ENCODE measurements at regions of chr15 and their contacts with region 1.

Region 1: GRCh38 chr15:65101411-65101890 is 13.5 kb downstream of the UBAP1L start:
- DNase-seq: no peak
- H3K4me3 ChIP-seq: no peak overlapping the region
- CTCF ChIP-seq: peak; percentile 74

Region 2: DNA sequence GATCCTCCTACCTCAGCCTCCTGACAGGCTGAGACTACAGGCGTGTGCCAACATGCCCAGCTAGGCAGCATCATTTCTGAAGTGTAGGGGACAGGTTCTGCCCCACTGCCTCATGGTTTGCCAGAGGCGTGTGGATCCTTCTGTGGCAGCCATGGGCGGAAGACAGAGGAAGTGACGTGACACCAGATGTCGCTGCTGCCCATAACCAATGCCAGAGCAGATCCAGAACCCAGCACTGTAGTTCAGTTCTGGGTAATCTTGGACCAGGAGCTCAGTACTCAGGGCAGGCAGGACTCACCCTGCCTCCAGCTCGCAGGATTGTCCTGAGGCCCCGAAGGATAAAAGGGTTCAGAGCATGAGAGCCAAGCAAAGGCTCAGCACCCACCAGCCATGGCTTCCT is 334.2 kb before region 1 on chr15:
- CTCF ChIA-PET with region 1: no interaction called
- POLR2A ChIA-PET with region 1: no interaction called
- DNase-seq: no peak
- H3K4me3 ChIP-seq: no peak overlapping the region
- CTCF ChIP-seq: no peak

Region 3: DNA sequence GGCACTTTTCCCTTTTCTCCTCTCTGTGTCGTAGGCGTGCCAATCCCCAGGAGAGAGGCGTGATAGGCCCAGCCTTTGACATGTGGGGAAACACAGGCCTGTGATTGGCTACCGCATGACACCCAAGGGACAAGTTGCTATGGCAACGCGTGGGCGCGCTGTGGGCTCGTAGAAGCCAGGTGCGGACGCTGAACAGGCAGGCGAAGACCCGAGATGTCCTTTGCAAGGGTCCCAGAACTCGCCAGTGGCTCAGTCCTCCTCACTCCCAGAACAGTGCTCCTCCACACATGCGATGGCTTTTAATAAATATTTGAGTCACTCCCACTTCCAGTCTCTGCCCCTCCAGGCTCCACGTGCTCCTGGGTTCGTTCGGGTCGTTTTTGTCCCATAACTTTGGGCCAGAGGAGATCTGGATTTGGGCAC is 52.0 kb before region 1 on chr15:
- CTCF ChIA-PET with region 1: interaction called, 133 read pairs
- POLR2A ChIA-PET with region 1: no interaction called
- DNase-seq: peak; percentile 50
- H3K4me3 ChIP-seq: peak overlapping the region; percentile 47
- CTCF ChIP-seq: no peak

Region 4: DNA sequence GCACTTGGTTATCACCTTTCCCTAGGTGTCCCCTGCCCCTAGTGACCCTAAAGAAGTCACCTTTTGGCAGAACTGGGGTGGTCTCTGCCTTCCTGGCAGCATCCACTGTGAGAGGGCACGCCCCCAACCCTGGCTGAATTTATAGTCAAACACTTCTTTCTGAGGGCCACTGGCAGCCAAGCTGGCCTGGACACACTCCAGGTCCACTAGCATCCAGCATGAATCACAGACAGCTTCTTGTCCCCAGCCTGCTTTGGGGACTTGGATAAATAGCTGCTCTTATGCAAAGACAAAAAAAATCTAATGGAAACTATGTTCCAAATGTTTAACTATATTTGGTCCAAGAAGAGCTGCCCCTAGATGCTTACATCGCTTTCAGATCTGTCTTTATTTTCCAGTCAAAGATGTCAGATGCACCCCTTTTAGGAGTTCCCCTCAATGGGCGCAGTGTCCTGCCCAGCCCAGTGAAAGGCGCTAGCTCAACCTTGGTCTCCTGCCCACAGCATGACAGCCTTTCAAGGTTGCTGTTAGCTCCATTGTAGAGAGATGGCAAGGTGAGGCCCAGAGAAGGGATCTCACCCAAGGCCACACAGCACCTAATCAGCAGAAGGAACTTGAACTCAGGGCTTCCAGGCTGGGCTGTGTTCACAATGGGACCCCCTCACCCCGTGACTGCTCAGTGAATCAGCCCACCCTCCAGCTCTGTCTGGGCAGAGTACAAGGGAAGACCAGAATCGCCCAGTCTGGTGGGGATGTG is 40.6 kb before region 1 on chr15:
- CTCF ChIA-PET with region 1: interaction called, 133 read pairs
- POLR2A ChIA-PET with region 1: no interaction called
- DNase-seq: no peak
- H3K4me3 ChIP-seq: no peak overlapping the region
- CTCF ChIP-seq: no peak

Region 5: DNA sequence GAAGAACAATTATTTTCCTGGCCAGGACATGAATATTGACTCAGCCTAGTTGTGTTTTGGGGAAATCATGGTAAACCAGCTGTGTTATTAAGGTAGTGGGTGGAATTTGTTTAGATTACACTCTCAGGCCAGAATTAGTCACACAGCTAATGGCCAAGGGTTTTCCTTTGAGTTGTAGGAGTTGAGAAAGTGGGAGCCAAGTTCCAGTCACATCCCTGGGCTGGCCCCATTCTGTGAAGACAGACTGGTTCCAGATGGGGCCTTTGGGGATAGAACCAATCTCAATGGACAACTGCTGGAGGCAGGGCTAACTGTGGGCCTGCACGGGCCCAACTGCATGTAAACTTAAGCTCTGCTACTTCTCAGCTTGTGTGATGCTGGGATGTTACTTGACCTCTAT is 32.3 kb before region 1 on chr15:
- CTCF ChIA-PET with region 1: interaction called, 12 read pairs
- POLR2A ChIA-PET with region 1: no interaction called
- DNase-seq: peak; percentile 47
- H3K4me3 ChIP-seq: no peak overlapping the region
- CTCF ChIP-seq: no peak

Region 6: DNA sequence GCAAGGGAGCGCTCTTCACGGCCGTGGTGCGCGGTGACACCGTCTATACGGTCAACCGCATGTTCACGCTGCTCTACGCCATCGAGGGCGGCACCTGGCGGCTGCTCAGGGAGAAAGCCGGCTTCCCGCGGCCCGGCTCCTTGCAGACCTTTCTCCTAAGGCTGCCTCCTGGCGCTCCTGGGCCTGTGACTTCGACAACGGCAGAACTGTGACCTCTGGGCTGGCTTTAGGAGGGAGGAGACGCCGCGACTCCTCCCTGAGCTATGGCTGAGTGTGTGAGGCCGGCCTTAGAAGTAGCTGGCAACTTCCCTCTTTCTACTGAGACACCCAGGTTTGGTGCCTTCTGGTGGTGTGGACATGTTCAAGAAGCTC is 23.5 kb before region 1 on chr15:
- CTCF ChIA-PET with region 1: interaction called, 117 read pairs
- POLR2A ChIA-PET with region 1: no interaction called
- DNase-seq: no peak
- H3K4me3 ChIP-seq: no peak overlapping the region
- CTCF ChIP-seq: peak; percentile 85

Region 7: DNA sequence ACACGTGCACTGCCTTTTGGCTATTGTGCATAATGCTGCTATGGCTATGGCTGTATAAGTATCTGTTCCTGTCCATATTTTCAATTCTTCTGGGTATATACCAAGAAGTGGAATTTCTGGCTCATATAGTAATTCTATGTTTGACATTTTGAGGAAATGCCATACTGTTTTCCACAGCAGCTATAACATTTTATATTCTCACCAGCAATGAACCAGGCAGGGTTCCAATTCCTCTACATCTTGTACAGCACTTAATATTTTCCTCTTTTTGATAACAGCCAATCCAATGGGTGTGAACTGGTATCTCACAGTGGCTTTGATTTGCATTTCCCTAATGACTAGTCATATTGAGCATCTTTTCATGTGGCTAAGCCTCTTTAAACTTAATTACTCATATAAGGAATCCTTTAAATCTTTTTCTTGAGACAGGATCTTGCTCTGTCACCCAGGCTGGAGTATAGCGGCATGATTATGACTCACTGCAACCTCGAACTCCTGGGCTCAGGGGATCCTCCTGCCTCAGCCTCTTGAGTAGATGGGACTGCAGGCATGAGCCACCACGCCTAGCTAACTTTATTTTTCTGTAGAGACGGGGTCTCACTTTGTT is 359.4 kb after region 1 on chr15:
- CTCF ChIA-PET with region 1: no interaction called
- POLR2A ChIA-PET with region 1: no interaction called
- DNase-seq: no peak
- H3K4me3 ChIP-seq: no peak overlapping the region
- CTCF ChIP-seq: no peak